Right cardiac atrium (tissue), 5 donors: ENCODE measurements at regions of chr4 and their contacts with region 1.

Region 1: GRCh38 chr4:2761035-2761923 is 5.1 kb upstream of the TNIP2 start:
- DNase-seq: peak in 2 of 3 donors; percentile 55 to 75
- ATAC-seq: peak in 1 of 2 donors; percentile 42
- H3K4me3 ChIP-seq: no peak overlapping the region
- H3K27ac ChIP-seq: no peak overlapping the region
- H3K4me1 ChIP-seq: no peaks in the 10 kb centered on the region
- H3K27me3 ChIP-seq: no peaks in the 10 kb centered on the region

Region 2: DNA sequence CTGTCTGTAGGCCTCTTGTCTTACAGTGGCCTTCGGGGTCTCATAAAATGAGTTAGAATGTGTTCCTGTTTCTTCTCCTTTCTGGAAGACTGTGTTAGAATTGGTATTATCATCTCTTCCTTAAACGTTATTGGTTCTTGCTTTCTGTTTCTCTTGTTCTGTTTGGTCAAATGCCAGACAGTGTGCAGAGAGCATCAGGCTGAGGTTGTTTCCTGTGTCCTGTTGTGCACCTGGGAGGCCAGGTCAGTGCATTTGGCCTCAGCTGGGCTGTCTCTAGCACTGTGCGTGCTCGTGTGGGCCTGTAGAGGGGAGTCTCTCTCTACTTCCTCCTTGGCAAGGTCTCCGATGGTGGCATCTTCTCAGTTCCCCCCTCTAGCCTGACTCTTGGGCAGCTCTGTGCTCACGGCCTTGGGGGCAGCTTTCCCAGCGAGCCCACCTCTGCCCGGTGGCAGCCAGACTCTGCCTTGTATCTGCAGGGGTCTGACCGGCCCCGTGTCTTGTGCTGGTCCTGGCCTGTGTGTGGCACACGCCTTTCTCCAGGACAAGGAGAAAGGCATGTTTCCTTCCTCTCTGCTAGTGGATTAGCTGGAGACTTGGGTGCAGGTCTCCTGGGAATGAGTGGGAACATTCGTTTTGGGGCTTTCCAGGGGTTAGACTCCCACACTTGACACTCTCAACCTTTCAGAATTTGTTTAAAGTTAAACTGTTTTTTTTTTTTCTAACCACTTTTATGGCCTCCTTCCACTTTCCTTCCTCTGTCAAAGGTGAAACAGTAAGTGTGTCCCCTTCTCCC is 162.6 kb before region 1 on chr4:
- intact Hi-C with region 1: no loop called
- DNase-seq: no peak
- ATAC-seq: peak; percentile 58
- H3K4me3 ChIP-seq: no peak overlapping the region
- H3K27ac ChIP-seq: no peak overlapping the region
- H3K4me1 ChIP-seq: peaks cover 19% of the 10 kb centered on the region
- H3K27me3 ChIP-seq: no peaks in the 10 kb centered on the region

Region 3: DNA sequence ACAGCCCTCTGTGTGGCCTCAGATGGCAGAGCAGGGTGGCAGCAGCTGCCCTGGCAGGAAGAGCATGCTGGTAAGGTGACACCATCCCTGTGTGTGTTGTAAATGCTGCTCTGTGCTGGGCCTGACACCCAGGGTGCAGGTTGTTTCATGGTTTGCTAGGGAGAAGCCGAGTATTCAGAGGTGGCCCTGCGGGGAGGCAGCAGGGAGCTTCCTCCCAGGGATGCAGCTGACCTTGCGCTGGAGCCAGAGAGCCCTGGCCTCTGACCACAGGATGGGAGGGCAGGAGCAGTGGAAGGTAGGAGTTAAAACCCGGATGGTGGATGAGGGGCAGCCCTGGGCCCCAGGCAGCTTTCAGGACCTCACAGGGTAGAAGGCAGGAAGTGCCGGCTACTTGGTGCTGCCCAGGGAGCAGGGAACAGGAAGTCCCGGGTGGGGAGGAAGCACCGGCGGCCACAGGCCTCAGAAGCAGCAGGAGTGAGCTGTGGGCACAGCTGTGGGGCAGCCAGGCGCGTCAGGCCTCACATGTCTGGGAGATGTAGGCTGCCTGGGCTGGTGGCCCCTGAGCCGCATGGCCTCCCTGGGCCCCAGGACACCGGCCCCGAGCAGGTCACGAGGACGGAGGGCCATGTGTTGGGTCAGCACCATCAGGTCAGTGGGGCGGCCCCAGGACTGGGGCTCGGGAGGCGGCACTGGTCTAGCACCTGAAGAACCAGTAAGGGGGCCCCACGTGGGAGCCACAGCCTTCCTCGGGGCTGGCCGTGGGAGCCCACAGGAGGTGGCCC is 50.7 kb after region 1 on chr4:
- intact Hi-C with region 1: loop called in 1 of 4 experiments (anchors 10 kb)
- DNase-seq: peak; percentile 78 to 89 (median 87)
- ATAC-seq: peak; percentile 75 to 82
- H3K4me3 ChIP-seq: peak overlapping the region; percentile 3
- H3K27ac ChIP-seq: peak overlapping the region; percentile 7
- H3K4me1 ChIP-seq: peaks cover 14% of the 10 kb centered on the region
- H3K27me3 ChIP-seq: no peaks in the 10 kb centered on the region

Region 4: DNA sequence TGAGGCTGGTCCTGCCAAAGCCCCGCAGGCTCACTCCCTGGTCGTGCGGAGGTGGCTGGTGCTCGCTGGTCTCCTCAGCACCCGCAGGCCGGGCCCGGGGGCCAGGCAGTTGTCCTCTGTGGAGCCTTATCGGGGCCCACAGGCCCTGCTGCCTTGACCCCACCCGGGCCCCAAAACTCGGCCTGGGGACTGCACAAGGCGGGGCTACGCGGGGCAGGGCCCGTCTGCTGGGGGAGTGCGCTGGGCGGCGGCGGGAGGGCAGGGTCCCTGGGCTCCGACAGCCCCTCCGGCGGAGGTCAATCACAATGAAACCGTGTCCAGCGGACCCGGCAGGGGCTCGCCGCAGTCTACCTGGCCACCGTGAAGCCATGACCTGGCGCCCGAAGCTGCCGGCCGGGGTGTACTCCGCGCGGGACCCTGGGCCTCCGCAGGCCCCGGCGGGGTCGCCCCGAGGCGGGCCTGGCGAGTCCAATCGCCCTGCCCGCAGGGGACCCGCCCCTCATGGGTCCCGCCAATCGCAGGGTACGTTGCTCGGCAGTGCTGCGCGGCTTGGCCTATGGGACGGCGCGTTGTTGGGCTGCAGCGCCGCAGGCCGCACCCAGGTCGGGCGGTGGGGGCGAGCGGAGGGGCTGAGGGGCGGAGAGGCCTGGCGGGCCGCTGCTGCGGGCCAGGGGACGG is 82.1 kb after region 1 on chr4 and contains the start of gene ADD1:
- intact Hi-C with region 1: loop called in 1 of 4 experiments (anchors 10 kb)
- DNase-seq: peak; percentile 89 to 97 (median 96)
- ATAC-seq: peak; percentile 99
- H3K4me3 ChIP-seq: peak within 1 kb of the TSS; percentile 99
- H3K27ac ChIP-seq: peak within 1 kb of the TSS; percentile 90
- H3K4me1 ChIP-seq: no peaks in the 10 kb centered on the region
- H3K27me3 ChIP-seq: no peaks in the 10 kb centered on the region
- total RNA-seq, gene ADD1: 215 to 256 (median 236) TPM

Region 5: DNA sequence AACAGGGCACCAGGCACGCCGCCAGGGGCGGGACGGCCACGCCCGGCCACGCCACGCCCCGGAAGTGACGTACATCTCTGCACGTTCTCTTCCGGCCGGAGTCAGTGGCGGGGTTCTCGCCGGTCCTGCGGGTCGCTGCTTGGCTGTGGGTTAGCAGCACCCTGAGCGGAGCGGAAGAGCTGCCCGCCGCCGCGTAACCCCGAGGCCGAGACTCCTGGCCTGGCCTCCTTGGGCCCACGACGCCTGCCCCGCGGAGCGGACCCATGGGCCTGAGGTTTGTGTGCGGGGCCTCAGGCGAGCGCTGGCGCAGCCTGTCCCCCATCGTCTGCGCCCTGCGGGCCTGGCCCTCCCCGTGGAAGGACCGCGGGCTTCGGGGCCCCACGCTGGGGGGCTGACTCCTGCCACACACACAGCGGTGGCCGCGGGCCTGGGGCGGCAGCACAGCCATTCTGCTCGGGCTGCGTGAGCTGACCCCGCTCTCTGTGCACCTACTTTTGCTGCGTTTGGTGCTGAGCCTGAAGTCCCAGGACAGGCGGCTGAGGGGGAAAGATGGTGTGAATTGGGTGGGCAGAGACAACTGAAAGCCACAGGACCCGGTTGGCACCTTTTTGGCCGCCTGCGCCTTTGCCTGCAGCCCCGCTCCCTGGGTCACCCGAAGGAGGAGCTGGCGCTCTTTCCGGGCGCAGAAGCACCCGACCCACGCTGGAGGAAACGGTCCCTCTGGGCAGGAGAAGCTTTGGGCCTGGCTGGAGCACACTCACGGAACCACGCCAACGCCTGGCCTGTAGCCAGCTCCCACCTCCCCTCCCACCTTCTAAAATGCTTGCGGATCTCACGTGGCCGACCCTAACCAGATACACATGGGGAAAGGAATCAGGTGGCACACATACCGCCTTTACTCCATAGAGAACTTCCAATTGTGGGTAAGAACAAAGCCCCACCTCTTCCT is 173.8 kb after region 1 on chr4:
- intact Hi-C with region 1: loop called in 3 of 4 experiments (anchors 10 kb)
- DNase-seq: peak; percentile 95 to 99 (median 98)
- ATAC-seq: peak; percentile 74 to 85
- H3K4me3 ChIP-seq: peak overlapping the region; percentile 81
- H3K27ac ChIP-seq: peak overlapping the region; percentile 80
- H3K4me1 ChIP-seq: peaks cover 7% of the 10 kb centered on the region
- H3K27me3 ChIP-seq: no peaks in the 10 kb centered on the region

Region 6: DNA sequence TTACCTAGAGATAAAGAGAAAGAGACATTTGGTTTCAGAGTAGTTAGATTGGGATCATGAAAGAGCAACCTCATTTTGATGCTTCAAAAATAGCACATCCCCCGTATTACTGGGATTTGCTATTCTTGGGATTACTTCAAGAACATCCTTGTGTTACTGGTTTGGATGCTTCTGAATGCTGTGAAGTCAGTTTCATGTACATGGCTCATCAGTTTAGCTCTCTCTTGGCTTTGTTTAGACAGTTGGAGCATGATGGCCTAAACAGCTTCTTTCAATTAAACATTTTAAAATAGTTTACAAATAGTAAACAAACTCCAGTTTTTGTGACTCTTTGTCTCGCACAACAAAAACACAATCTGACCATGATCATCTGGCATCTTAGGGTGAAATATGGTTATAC is 337.1 kb after region 1 on chr4:
- intact Hi-C with region 1: no loop called
- DNase-seq: no peak
- ATAC-seq: no peak
- H3K4me3 ChIP-seq: no peak overlapping the region
- H3K27ac ChIP-seq: no peak overlapping the region
- H3K4me1 ChIP-seq: no peaks in the 10 kb centered on the region
- H3K27me3 ChIP-seq: no peaks in the 10 kb centered on the region

Region 7: DNA sequence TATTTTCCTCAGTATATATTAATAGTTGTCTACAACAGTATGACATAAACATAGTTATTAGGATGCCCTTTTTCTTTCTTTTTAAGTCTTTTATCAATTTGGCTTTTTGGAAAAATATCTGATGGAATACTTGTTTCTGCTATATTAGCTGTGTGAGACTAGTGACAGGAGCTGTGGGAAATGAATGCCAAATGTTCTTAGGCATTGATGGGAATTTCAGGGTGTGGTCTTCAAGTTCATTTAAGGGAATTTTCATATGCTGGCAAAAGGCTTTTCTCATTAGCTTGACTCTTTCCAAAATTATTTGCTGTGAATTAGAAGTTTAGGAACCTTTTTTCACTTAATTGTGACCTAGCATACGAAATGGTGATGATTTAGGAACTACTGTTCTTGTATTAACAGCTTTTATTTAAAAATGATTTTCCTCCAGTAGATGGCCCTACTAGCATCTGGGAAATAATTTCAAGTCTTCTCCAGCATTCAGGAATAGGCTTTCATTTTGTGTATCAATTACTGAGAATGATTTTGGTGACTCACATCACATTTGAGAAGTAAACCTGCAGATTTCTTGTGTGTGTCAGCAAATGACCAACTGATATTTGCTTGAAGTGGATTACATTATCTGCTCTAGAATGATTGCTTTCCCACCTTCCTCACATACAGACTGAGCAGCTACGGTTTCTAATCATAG is 384.1 kb after region 1 on chr4:
- intact Hi-C with region 1: no loop called
- DNase-seq: no peak
- ATAC-seq: no peak
- H3K4me3 ChIP-seq: no peak overlapping the region
- H3K27ac ChIP-seq: no peak overlapping the region
- H3K4me1 ChIP-seq: no peaks in the 10 kb centered on the region
- H3K27me3 ChIP-seq: no peaks in the 10 kb centered on the region